CD4-positive, alpha-beta T cell (primary cell): ENCODE measurements at regions of chr10 and their contacts with region 1.

Region 1: DNA sequence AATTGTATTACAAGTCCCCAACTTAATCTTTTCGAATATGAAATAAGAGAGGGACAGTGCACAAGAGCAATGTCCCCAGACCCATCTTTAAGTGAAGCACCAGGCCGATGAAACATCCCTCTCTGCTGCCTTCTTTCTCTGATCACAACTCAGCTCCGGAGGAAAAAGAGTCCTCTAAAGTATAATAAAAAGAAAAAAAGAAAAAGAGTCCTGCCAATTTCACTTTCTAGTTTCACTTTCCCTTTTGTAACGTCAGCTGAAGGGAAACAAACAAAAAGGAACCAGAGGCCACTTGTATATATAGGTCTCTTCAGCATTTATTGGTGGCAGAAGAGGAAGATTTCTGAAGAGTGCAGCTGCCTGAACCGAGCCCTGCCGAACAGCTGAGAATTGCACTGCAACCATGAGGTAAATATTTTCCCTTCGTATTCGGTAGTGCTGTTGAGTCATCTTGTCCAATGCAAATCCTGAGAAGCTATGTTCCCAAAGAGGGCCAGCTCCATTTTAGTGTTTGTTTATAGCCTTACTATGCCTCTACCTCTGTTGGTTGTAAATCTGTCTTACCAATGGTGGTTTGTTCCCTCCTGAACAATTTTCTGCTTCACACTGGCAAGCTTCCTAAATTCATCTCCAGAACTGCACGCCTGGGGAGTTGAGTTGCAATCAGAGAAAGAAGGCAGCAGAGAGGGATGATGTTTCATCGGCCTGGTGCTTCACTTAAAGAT is at the start of gene IFIT2:
- DNase-seq: peak in 10 of 14 experiments; percentile 11 to 84 (median 35)
- ATAC-seq: peak; percentile 78
- H3K4me3 ChIP-seq: peak within 1 kb of the TSS; percentile 68
- H3K4me3 Mint-ChIP-seq: peak within 1 kb of the TSS; percentile 93
- H3K27ac ChIP-seq: peak within 1 kb of the TSS; percentile 78 to 89
- H3K27ac Mint-ChIP-seq: peak within 1 kb of the TSS; percentile 99
- H3K4me1 ChIP-seq: peaks cover 15% of the 10 kb centered on the region
- H3K4me1 Mint-ChIP-seq: peaks cover 58% of the 10 kb centered on the region
- H3K27me3 ChIP-seq: no peaks in the 10 kb centered on the region
- H3K27me3 Mint-ChIP-seq: no peaks in the 10 kb centered on the region
- CTCF ChIP-seq: no peak
- total RNA-seq, gene IFIT2: 36.9 to 38.9 TPM

Region 2: DNA sequence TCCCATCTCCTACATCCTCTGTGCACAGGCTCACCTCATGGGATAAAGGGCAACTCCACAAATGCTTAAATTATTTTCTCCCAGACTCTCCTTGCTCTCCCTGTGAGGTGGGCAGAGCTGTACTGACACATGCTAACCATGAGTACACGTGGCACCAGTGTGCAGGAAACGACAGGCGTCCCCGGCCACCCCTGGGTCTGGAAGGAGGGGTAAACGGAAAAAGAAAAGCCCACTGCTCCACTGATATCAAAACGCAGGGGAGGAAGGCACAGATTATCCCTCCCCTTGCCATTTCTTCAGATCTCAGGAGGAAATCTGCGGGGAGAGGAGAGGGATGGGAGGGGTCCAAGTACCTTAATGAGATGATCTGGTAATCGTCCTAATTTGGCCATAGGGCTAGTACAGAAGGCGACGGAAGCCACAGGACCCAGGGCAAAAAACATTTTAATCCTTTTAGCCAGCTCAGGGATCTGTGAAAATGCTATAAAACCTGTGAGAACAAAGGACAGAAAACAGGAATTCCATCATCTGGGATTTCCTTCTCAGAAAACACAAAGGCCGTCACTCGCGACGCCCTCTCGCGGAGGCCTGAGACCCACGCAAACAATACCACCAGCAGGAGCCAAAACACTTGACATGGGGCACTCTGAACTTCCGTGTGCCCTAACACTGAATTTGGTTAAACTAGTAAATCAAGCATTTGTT is 77.0 kb before region 1 on chr10:
- CTCF ChIA-PET with region 1: no interaction called
- POLR2A ChIA-PET with region 1: no interaction called
- intact Hi-C with region 1: no loop called
- DNase-seq: peak in 3 of 14 experiments; percentile 29 to 35 (median 34)
- ATAC-seq: no peak
- H3K4me3 ChIP-seq: peak overlapping the region; percentile 2
- H3K4me3 Mint-ChIP-seq: peak overlapping the region; percentile 20
- H3K27ac ChIP-seq: no peak overlapping the region
- H3K27ac Mint-ChIP-seq: no peak overlapping the region
- H3K4me1 ChIP-seq: no peaks in the 10 kb centered on the region
- H3K4me1 Mint-ChIP-seq: peaks cover 9% of the 10 kb centered on the region
- H3K27me3 ChIP-seq: no peaks in the 10 kb centered on the region
- H3K27me3 Mint-ChIP-seq: no peaks in the 10 kb centered on the region
- CTCF ChIP-seq: peak; percentile 23

Region 3: GRCh38 chr10:89251409-89252224 is 50.3 kb before region 1 on chr10 and contains the start of gene LIPA:
- CTCF ChIA-PET with region 1: no interaction called
- POLR2A ChIA-PET with region 1: interaction called, 34 read pairs
- intact Hi-C with region 1: loop called in 1 of 2 experiments (anchors 5 kb)
- DNase-seq: peak; percentile 89 to 99 (median 94)
- ATAC-seq: peak; percentile 97
- H3K4me3 ChIP-seq: peak within 1 kb of the TSS; percentile 72
- H3K4me3 Mint-ChIP-seq: peak within 1 kb of the TSS; percentile 92
- H3K27ac ChIP-seq: peak within 1 kb of the TSS; percentile 14 to 41
- H3K27ac Mint-ChIP-seq: peak within 1 kb of the TSS; percentile 89
- H3K4me1 ChIP-seq: peaks cover 10% of the 10 kb centered on the region
- H3K4me1 Mint-ChIP-seq: peaks cover 30% of the 10 kb centered on the region
- H3K27me3 ChIP-seq: no peaks in the 10 kb centered on the region
- H3K27me3 Mint-ChIP-seq: no peaks in the 10 kb centered on the region
- CTCF ChIP-seq: no peak
- total RNA-seq, gene LIPA: 15.6 to 16.4 TPM

Region 4: GRCh38 chr10:89363729-89364442 is 62.0 kb after region 1 on chr10:
- CTCF ChIA-PET with region 1: interaction called, 6 read pairs
- POLR2A ChIA-PET with region 1: interaction called, 12 read pairs
- intact Hi-C with region 1: loop called in 1 of 2 experiments (anchors 5 kb)
- DNase-seq: no peak
- ATAC-seq: no peak
- H3K4me3 ChIP-seq: no peak overlapping the region
- H3K4me3 Mint-ChIP-seq: no peak overlapping the region
- H3K27ac ChIP-seq: no peak overlapping the region
- H3K27ac Mint-ChIP-seq: no peak overlapping the region
- H3K4me1 ChIP-seq: peaks cover 7% of the 10 kb centered on the region
- H3K4me1 Mint-ChIP-seq: peaks cover 12% of the 10 kb centered on the region
- H3K27me3 ChIP-seq: no peaks in the 10 kb centered on the region
- H3K27me3 Mint-ChIP-seq: no peaks in the 10 kb centered on the region
- CTCF ChIP-seq: no peak

Region 5: GRCh38 chr10:89391917-89392756 is 90.3 kb after region 1 on chr10 and contains the start of gene IFIT1:
- CTCF ChIA-PET with region 1: no interaction called
- POLR2A ChIA-PET with region 1: interaction called, 43 read pairs
- intact Hi-C with region 1: loop called in 1 of 2 experiments (anchors 2 kb)
- DNase-seq: peak in 12 of 14 experiments; percentile 6 to 92 (median 52)
- ATAC-seq: peak; percentile 94
- H3K4me3 ChIP-seq: peak within 1 kb of the TSS; percentile 60
- H3K4me3 Mint-ChIP-seq: peak within 1 kb of the TSS; percentile 93
- H3K27ac ChIP-seq: peak within 1 kb of the TSS; percentile 58 to 60
- H3K27ac Mint-ChIP-seq: peak within 1 kb of the TSS; percentile 93
- H3K4me1 ChIP-seq: peaks cover 21% of the 10 kb centered on the region
- H3K4me1 Mint-ChIP-seq: peaks cover 47% of the 10 kb centered on the region
- H3K27me3 ChIP-seq: no peaks in the 10 kb centered on the region
- H3K27me3 Mint-ChIP-seq: no peaks in the 10 kb centered on the region
- CTCF ChIP-seq: no peak
- total RNA-seq, gene IFIT1: 5.1 to 6.2 TPM

Region 6: GRCh38 chr10:89426230-89426868 is 124.5 kb after region 1 on chr10:
- CTCF ChIA-PET with region 1: no interaction called
- POLR2A ChIA-PET with region 1: interaction called, 3 read pairs
- intact Hi-C with region 1: loop called in 1 of 2 experiments (anchors 2 kb)
- DNase-seq: peak in 4 of 14 experiments; percentile 15 to 62 (median 52)
- ATAC-seq: peak; percentile 71
- H3K4me3 ChIP-seq: no peak overlapping the region
- H3K4me3 Mint-ChIP-seq: no peak overlapping the region
- H3K27ac ChIP-seq: no peak overlapping the region
- H3K27ac Mint-ChIP-seq: no peak overlapping the region
- H3K4me1 ChIP-seq: no peaks in the 10 kb centered on the region
- H3K4me1 Mint-ChIP-seq: peaks cover 6% of the 10 kb centered on the region
- H3K27me3 ChIP-seq: peaks cover 0 to 6% of the 10 kb centered on the region in 2 experiments
- H3K27me3 Mint-ChIP-seq: no peaks in the 10 kb centered on the region
- CTCF ChIP-seq: peak; percentile 72

Region 7: GRCh38 chr10:89466599-89467035 is 164.7 kb after region 1 on chr10:
- CTCF ChIA-PET with region 1: no interaction called
- POLR2A ChIA-PET with region 1: no interaction called
- intact Hi-C with region 1: no loop called
- DNase-seq: peak in 1 of 14 experiments; percentile 2
- ATAC-seq: no peak
- H3K4me3 ChIP-seq: no peak overlapping the region
- H3K4me3 Mint-ChIP-seq: no peak overlapping the region
- H3K27ac ChIP-seq: no peak overlapping the region
- H3K27ac Mint-ChIP-seq: no peak overlapping the region
- H3K4me1 ChIP-seq: no peaks in the 10 kb centered on the region
- H3K4me1 Mint-ChIP-seq: no peaks in the 10 kb centered on the region
- H3K27me3 ChIP-seq: no peaks in the 10 kb centered on the region
- H3K27me3 Mint-ChIP-seq: no peaks in the 10 kb centered on the region
- CTCF ChIP-seq: no peak